Spleen (tissue), 13 donors: ENCODE measurements at regions of chr6 and their contacts with region 1.

Region 1: DNA sequence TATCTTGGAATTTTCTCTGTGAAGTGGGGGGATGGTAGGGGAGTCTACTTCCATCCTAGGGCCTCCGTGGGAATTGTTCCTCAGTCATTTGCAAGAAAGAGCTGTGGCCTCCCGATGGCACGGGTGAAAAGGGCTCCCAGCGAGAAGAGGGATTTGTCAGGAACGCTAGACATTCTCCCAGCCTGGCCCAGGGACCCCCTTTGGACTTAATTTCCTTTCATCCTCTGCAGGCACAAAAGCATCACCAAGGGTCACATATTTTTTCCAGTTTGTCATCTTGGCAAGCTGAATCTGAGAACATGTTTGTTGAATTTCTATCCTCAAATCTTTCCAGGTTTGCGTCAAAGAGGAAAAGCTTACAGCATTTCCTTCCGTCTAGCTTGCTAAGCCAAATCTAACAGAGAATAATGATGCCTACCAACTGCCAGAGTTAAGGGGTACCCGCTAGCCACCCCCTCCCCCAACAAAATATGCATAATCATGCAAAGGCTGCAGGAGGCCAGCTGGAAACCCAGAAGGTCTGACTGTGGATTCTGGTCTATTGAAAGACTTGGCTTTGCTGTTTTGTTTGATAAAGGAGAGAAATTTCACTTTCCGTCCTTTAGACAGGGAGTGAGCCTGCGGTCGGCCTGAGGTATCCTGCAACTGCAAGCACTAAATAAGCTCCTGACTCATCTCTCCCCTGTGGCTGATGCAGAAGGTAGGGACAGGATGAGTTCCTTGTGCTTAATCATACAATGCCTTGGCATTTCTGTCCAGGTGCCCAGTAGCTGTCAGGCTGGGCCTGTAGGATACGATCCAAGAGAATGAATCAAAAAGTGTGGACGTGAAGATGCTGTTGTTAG is 23.1 kb downstream of the PSMG4 start:
- DNase-seq: peak; percentile 40
- H3K4me3 ChIP-seq: no peak overlapping the region
- H3K27ac ChIP-seq: peak overlapping the region in 2 of 8 donors; percentile 27 to 31
- H3K4me1 ChIP-seq: peaks cover 5 to 24% (median 11%) of the 10 kb centered on the region in 6 donors
- H3K27me3 ChIP-seq: no peaks in the 10 kb centered on the region
- CTCF ChIP-seq: no peak
- POLR2A ChIP-seq: no peak

Region 2: DNA sequence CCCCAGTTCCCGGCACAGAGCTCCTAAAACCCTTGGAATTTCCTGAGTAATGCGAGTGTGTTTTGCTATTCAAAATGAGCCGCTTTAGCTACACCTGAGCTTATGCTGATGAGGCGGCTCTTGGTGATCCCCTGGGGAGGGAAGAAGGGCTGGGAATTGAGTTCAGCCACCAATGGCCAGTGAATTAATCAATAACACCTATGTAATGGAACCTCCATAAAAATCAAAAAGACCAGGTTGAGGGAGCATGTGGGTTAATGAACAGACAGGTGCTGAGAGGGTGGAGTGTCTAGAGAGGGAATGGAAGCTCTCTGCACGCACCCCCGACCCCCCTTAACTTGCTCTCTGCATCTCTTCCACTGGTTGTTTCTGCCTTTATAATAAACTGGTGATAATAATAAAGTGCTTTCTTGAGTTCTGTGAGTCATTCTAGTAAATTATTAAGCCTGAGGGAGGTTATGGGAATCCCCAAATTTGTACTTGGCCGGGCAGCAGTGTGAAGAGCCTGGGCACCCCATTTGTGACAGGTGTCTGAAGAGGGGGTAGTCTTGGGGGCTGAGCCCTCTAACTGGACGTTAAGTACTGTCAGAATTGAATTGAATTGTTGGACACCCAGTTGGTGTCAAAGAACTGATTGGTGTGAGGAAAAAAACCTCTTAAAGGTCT is 415.5 kb before region 1 on chr6:
- intact Hi-C with region 1: no loop called
- DNase-seq: no peak
- H3K4me3 ChIP-seq: no peak overlapping the region
- H3K27ac ChIP-seq: peak overlapping the region in 1 of 8 donors; percentile 39
- H3K4me1 ChIP-seq: peaks cover 9 to 77% (median 42%) of the 10 kb centered on the region in 6 donors
- H3K27me3 ChIP-seq: no peaks in the 10 kb centered on the region
- CTCF ChIP-seq: no peak
- POLR2A ChIP-seq: no peak

Region 3: DNA sequence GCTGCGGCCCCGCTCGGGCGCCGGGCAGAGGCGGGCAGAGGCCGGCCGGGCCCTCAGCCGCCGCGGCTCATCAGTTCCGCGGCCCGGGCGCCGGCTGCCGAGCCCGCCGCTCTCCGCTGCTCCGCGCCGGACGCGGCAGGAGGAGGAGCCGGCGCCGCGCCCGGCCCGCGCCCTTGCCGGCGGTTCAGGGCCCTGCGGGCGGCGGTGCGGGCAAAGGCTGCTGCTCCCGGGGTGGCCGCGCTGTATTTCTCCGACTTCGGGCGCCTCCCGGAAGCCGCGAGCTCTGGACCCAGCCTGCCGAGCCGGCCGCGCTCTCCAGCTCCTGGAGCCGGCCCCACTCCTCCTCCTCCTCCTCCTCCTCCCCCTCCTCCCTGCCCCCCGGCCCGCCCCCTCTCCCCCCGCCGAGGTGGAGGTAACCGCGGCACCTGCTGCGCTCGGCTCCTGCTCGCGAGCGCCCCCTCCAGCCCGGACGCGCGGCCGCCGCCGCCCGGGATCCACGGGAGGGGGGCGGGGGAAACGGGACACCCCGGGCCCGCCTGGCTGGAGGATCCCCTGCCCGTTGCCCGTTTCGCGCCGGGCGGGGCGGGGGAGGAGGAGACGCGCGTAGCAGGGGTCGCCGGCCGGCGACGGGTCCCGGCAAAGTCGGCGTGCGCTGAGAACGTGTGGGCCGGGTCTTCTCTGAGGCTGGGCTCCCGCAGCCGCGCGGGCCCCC is 175.1 kb after region 1 on chr6 and contains the start of gene SLC22A23:
- intact Hi-C with region 1: loop called (anchors 10 kb)
- DNase-seq: peak; percentile 87
- H3K4me3 ChIP-seq: peak within 1 kb of the TSS; percentile 37 to 76 (median 52)
- H3K27ac ChIP-seq: peak within 1 kb of the TSS in 2 of 8 donors; percentile 11 to 22
- H3K4me1 ChIP-seq: peaks cover 6 to 36% (median 26%) of the 10 kb centered on the region in 6 donors
- H3K27me3 ChIP-seq: peaks cover 0 to 74% (median 54%) of the 10 kb centered on the region in 7 donors
- CTCF ChIP-seq: peak in 8 of 11 experiments; percentile 32 to 85 (median 80)
- POLR2A ChIP-seq: no peak
- total RNA-seq, gene SLC22A23: 15.1 to 22.6 (median 20.2) TPM

Region 4: GRCh38 chr6:3732345-3733141 is 450.7 kb after region 1 on chr6:
- intact Hi-C with region 1: loop called (anchors 5 kb)
- DNase-seq: peak; percentile 89
- H3K4me3 ChIP-seq: no peak overlapping the region
- H3K27ac ChIP-seq: no peak overlapping the region
- H3K4me1 ChIP-seq: peaks cover 0 to 25% (median 8%) of the 10 kb centered on the region in 6 donors
- H3K27me3 ChIP-seq: no peaks in the 10 kb centered on the region
- CTCF ChIP-seq: peak; percentile 40 to 84 (median 70)
- POLR2A ChIP-seq: no peak

Region 5: DNA sequence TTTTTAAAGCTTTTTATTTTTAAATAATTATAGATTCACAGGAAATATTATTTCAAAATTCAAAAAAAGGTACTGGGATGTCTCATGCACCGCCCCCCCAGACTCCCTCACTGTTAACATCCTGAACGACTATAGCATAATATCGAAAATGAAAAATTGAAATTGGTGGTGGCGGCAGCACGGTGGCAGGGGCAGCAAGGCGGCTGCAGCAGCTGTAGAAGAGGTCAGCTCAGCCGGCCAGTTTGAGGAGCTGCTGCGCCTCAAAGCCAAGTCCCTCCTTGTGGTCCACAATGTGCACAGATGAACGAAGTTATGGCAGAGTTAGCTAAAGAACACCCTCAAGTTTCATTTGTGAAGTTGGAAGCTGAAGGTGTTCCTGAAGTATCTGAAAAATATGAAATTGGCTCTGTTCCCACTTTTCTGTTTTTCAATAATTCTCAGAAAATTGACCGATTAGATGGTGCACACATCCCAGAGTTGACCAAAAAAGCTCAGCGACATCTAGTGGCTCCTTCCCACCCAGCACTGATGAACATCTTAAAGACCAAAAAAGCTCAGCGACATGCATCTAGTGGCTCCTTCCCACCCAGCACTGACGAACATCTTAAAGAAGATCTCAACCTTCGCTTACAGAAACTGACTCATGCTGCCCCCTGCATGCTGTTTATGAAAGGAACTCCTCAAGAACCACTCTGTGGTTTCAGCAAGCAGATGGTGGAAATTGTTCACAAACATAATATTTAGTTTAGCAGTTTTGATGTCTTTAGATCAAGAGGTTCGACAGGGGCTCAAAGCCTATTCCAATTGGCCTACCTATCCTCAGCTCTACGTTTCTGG is 696.2 kb after region 1 on chr6:
- intact Hi-C with region 1: loop called (anchors 10 kb)
- DNase-seq: no peak
- H3K4me3 ChIP-seq: no peak overlapping the region
- H3K27ac ChIP-seq: no peak overlapping the region
- H3K4me1 ChIP-seq: peaks cover 0 to 11% (median 5%) of the 10 kb centered on the region in 6 donors
- H3K27me3 ChIP-seq: no peaks in the 10 kb centered on the region
- CTCF ChIP-seq: peak in 10 of 11 experiments; percentile 25 to 74 (median 52)
- POLR2A ChIP-seq: no peak

Region 6: DNA sequence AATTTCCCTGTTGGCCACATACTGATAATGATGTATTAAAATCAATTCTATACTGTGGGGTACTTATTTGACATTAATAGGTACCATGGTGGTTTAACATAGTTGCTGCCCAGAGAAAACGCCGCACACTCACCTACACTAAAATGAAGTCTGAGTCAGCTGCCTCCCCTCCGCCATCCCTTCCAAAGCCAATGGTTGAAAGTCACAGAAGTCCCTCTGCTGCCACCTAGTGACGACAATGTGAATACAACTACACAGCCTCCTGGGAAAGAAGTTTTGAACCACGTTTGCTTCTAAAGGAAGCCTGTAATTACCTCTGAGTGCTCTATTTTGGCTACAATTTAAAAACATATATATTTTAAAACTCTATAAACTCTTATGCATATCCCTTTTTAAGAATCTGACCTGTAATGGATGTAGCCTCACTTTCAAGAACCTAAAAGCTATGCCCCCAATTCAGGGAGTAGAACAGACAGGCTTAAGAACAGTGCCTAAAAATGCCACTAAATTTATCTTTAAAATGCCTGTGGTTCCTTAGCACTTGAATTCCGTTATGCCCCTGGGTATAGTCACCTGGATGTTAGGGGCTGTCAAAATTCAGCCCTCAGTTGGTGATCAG is 874.1 kb after region 1 on chr6:
- intact Hi-C with region 1: loop called (anchors 10 kb)
- DNase-seq: no peak
- H3K4me3 ChIP-seq: no peak overlapping the region
- H3K27ac ChIP-seq: no peak overlapping the region
- H3K4me1 ChIP-seq: peaks cover 0 to 16% (median 2%) of the 10 kb centered on the region in 6 donors
- H3K27me3 ChIP-seq: peaks cover 0 to 4% (median 0%) of the 10 kb centered on the region in 7 donors
- CTCF ChIP-seq: peak; percentile 60 to 90 (median 82)
- POLR2A ChIP-seq: no peak